A673 (cell line): ENCODE measurements at regions of chr10 and their contacts with region 1.

Region 1: GRCh38 chr10:104614245-104614831 is 26.8 kb upstream of the SORCS3 start:
- DNase-seq: peak; percentile 56
- H3K4me3 ChIP-seq: no peak overlapping the region
- H3K27ac ChIP-seq: no peak overlapping the region
- H3K4me1 ChIP-seq: no peaks in the 10 kb centered on the region
- H3K27me3 ChIP-seq: peaks cover 6% of the 10 kb centered on the region
- CTCF ChIP-seq: peak; percentile 69

Region 2: DNA sequence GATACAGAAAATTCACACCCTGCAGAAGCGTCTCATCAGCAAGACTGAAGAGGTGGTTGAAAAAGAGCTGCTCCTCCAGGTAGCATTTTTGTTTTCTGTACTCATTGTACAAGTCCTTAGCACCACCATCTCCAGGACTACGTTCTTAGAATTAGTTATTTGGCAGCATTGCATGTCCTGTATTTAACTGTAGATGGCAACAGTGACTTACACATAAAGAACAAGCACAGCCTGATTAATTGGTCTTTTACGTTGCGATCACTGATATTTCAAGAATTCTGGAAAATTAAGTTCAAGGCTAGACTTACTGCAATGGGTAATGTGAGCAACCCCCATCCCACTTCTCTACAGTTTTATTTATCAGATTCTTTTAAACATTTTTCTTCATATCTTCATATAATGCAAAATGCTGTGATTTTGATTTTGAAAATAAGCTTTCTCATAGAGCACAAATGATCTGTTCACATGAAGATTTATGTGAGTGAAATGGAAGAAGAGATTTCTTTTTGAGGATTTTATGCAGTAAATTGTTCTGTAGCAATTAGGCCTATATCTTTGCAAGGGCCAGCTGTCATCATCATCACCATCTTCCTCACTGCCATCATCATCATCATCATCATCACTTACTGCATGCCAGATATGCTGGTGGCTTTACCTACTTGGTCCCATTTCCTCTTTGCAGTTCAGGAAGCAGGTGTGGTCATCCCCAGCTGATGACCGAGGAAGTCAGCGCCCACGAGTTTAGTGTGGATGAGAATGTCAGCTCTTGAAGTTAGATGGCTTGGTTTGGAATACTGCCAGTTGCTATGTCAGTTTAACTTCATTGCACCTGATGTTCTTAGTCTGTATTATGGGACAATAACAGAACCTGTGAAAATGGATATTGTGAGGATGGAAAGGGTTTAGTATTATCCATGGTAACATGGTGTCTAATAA is 207.4 kb before region 1 on chr10:
- CTCF ChIA-PET with region 1: no interaction called
- POLR2A ChIA-PET with region 1: no interaction called
- intact Hi-C with region 1: loop called (anchors 2 kb)
- DNase-seq: peak; percentile 57
- H3K4me3 ChIP-seq: no peak overlapping the region
- H3K27ac ChIP-seq: no peak overlapping the region
- H3K4me1 ChIP-seq: no peaks in the 10 kb centered on the region
- H3K27me3 ChIP-seq: peaks cover 49% of the 10 kb centered on the region
- CTCF ChIP-seq: peak; percentile 71

Region 3: GRCh38 chr10:104580774-104581675 is 33.3 kb before region 1 on chr10:
- CTCF ChIA-PET with region 1: interaction called, 3 read pairs
- POLR2A ChIA-PET with region 1: no interaction called
- intact Hi-C with region 1: loop called (anchors 1 kb)
- DNase-seq: peak; percentile 74
- H3K4me3 ChIP-seq: no peak overlapping the region
- H3K27ac ChIP-seq: no peak overlapping the region
- H3K4me1 ChIP-seq: no peaks in the 10 kb centered on the region
- H3K27me3 ChIP-seq: peaks cover 25% of the 10 kb centered on the region
- CTCF ChIP-seq: peak; percentile 89